ENCODE measurements at regions of chr18 and their contacts with region 1.

Region 1: DNA sequence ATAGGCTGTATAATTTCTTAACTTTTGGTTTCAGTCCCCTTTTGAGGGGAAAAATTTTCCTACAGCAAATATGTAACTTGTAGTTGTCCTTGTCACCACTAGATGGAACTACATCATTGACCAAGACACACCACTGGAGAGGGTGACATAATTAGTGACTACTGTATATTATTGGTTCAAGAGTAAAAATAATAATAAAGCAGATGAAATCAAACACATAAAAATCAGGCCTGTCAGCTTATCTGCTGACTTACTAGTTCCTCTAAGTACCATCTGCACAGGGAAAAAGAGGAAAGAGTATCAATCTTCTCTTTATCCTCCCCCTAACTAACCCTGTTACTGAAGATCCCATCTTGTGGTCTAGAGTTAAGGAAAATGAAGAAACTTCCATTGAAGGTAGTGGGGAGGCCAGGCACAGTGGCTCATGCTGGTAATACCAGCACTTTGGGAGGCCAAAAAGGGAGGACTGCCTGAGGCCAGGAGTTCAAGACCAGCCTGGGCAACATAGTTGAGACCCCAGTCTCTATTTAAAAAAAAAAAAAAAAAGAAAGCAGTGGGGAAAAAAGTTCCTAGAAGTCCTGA is 29.6 kb upstream of the ENOSF1 start:
- DNase-seq: peak; percentile 8
- H3K4me3 ChIP-seq: no peak overlapping the region
- H3K27ac ChIP-seq: no peak overlapping the region
- H3K4me1 ChIP-seq: no peaks in the 10 kb centered on the region
- H3K27me3 ChIP-seq: no peaks in the 10 kb centered on the region
- CTCF ChIP-seq: peak; percentile 55 to 65

Region 2: DNA sequence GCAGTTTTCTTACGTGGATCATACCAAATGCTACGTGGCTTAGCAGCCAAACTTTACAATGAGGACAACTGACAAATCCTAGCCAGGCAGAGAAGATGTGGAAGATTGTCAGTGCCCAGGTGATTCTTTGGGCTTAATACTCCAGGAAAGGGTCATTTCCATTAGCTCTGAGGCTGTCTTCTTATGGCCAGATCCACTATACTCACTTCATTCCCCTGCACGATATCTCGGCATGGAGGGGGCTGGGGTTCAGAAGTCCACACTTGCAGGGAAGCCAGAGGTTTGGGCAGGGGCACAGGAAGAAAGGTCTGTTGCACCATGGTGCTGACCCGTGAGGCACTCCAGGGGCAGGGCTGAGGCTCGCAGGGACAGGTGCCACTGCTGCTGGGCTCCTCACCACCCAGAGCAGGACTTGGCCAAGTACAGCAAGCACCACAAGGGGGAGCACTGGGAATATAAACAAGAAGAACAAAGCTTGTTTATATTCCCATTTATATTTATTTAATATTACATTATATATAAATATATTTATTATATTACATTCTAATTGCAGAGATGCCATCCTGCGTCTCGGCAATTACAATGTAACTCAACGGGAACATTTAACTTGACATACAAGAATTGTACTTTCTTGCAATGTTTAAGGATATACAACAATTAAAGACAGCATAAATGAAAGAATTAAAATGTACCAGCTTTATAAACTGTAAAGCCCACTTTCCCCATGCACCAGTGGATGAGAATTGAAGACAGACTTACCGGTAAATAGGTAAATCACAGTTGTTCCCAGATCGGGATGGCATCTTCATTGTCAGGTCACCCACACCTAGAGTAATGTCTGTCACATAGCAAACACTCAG is 118.0 kb before region 1 on chr18:
- CTCF ChIA-PET with region 1: no interaction called
- dilution Hi-C with region 1: no loop called
- in situ Hi-C with region 1: no loop called
- intact Hi-C with region 1: loop called (anchors 1 kb)
- DNase-seq: peak; percentile 34
- H3K4me3 ChIP-seq: no peak overlapping the region
- H3K27ac ChIP-seq: no peak overlapping the region
- H3K4me1 ChIP-seq: no peaks in the 10 kb centered on the region
- H3K27me3 ChIP-seq: peaks cover 2% of the 10 kb centered on the region
- CTCF ChIP-seq: peak; percentile 56 to 78

Region 3: GRCh38 chr18:784470-785172 is 42.6 kb after region 1 on chr18:
- CTCF ChIA-PET with region 1: no interaction called
- dilution Hi-C with region 1: loop called (anchors 5 kb)
- in situ Hi-C with region 1: no loop called
- intact Hi-C with region 1: no loop called
- DNase-seq: no peak
- H3K4me3 ChIP-seq: no peak overlapping the region
- H3K27ac ChIP-seq: no peak overlapping the region
- H3K4me1 ChIP-seq: no peaks in the 10 kb centered on the region
- H3K27me3 ChIP-seq: no peaks in the 10 kb centered on the region
- CTCF ChIP-seq: no peak

Region 4: DNA sequence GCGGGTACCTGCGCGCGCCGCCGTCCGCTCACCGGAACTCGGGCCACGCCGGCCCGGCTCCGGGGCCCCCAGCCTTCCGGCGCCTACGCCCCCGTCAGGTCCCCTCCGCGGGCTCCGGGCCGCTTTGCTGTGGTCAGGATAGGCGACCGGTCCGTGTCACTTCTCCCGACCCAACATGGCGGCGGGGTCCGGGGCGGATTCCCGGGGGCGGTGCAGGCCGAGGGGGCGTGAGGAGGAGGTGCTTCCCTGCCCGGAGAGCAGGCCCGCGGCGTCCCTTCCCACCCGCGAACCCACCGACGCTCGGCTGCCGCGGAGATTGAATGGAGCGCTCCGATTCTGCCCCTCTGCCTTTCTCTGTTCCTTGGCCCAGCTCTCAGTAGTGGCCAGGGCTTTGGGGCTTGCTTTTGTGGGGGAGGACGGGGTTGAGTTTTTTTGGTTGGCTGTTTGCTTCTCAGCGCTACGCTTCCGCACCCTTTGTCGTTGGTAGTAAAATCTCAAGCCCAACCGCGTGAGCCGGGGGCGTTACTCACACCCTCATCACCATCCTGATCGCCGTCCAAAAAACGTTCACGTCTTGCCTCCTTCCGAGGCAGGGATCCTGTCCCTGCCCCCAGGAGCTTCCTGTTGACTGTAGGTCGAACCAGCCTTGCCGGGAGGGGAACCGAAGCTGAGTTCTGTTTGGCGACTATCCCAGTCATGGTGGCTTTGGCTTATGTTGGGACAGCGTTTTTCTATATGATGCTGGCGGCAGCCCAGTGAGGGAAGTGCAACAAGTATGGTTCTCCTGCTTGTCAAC is 70.6 kb after region 1 on chr18:
- CTCF ChIA-PET with region 1: no interaction called
- dilution Hi-C with region 1: no loop called
- in situ Hi-C with region 1: no loop called
- intact Hi-C with region 1: loop called (anchors 5 kb)
- DNase-seq: peak; percentile 75
- H3K4me3 ChIP-seq: peak overlapping the region; percentile 75 to 100 (median 95)
- H3K27ac ChIP-seq: peak overlapping the region; percentile 92
- H3K4me1 ChIP-seq: peaks cover 6% of the 10 kb centered on the region
- H3K27me3 ChIP-seq: no peaks in the 10 kb centered on the region
- CTCF ChIP-seq: no peak

Region 5: DNA sequence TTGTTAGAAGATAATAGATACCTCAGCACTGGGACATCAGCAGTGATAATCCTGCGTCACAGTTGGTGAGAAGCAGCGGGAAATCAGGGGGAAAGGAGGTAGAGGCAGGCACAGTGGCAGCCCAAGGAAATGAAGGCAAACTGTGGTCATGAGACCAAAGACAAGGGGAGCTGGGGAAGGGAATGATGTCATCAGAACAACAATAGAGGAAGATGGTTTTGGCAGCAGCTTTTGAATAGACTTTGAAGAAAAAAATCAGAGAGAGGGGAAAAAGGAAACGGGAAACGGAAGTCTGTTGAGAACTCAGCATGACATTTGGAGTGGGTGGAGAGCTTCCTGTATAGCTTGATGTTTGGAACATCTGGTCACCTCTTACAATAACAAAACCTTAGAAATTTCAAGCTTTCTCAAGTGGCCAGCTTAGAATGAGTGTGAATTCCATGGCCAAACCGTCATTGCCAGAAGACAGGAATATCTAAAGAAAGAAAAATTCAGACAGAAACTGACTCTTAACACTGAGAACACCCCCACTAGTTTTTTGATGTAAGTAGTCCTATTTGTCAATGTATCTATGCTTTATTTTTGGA is 88.4 kb after region 1 on chr18:
- CTCF ChIA-PET with region 1: no interaction called
- dilution Hi-C with region 1: loop called (anchors 5 kb)
- in situ Hi-C with region 1: loop called (anchors 10 kb)
- intact Hi-C with region 1: loop called (anchors 1 kb)
- DNase-seq: peak; percentile 11
- H3K4me3 ChIP-seq: no peak overlapping the region
- H3K27ac ChIP-seq: no peak overlapping the region
- H3K4me1 ChIP-seq: peaks cover 9% of the 10 kb centered on the region
- H3K27me3 ChIP-seq: no peaks in the 10 kb centered on the region
- CTCF ChIP-seq: no peak

Region 6: DNA sequence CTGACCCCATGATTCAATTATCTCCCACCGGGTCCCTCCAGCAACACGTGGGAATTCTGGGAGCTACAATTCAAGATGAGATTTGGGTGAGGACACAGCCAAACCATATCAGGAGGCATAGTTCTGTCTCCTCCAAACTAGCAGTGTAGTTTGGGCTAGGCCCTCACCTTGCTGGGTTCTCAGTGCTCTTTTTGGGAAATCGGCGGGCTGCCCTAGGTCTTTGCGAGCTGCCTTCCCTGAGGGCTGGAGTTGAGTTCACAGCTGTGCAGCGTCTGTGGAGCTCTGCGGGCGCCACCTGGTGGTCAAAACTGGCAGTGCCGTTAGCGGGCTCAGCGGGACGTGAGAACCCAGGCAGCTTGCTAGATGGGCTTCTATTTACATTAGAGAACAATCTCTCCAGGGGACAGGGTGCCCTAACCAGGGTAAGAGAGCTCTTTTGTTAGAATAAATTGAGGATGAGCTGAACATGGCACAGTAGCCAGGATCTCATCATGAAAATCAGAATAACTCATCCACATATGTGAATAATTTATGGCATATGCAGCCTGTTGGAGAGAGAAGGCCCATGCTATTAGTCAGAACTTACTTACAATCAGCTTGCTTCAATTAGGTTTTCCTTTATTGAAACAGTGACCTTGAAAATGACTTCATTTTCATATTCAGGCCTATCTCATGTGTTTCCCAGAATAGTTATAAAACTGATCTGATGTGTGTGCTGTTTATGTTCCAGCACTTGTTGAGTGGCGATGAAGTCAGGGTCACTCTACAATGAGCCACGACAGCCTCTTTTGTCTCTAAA is 97.4 kb after region 1 on chr18:
- CTCF ChIA-PET with region 1: interaction called, 3 read pairs
- dilution Hi-C with region 1: loop called (anchors 5 kb)
- in situ Hi-C with region 1: loop called (anchors 10 kb)
- intact Hi-C with region 1: loop called (anchors 2 kb)
- DNase-seq: peak; percentile 62
- H3K4me3 ChIP-seq: no peak overlapping the region
- H3K27ac ChIP-seq: no peak overlapping the region
- H3K4me1 ChIP-seq: no peaks in the 10 kb centered on the region
- H3K27me3 ChIP-seq: no peaks in the 10 kb centered on the region
- CTCF ChIP-seq: peak; percentile 97 to 99

Measured in mammary epithelial cell (primary cell).